Panc1 (cell line): ENCODE measurements at regions of chr17 and their contacts with region 1.

Region 1: GRCh38 chr17:75109407-75110233 is at the start of gene ARMC7:
- DNase-seq: no peak
- ATAC-seq: peak; percentile 78
- H3K4me3 ChIP-seq: peak within 1 kb of the TSS; percentile 83 to 88
- H3K27ac ChIP-seq: peak within 1 kb of the TSS; percentile 88
- H3K4me1 ChIP-seq: peaks cover 42% of the 10 kb centered on the region
- H3K27me3 ChIP-seq: no peaks in the 10 kb centered on the region
- CTCF ChIP-seq: no peak
- total RNA-seq, gene ARMC7: 48.7 TPM

Region 2: GRCh38 chr17:75059369-75060345 is 50.0 kb before region 1 on chr17:
- CTCF ChIA-PET with region 1: interaction called, 11 read pairs
- POLR2A ChIA-PET with region 1: no interaction called
- in situ Hi-C with region 1: no loop called
- intact Hi-C with region 1: no loop called
- DNase-seq: no peak
- ATAC-seq: peak; percentile 78
- H3K4me3 ChIP-seq: no peak overlapping the region
- H3K27ac ChIP-seq: no peak overlapping the region
- H3K4me1 ChIP-seq: no peaks in the 10 kb centered on the region
- H3K27me3 ChIP-seq: no peaks in the 10 kb centered on the region
- CTCF ChIP-seq: no peak

Region 3: DNA sequence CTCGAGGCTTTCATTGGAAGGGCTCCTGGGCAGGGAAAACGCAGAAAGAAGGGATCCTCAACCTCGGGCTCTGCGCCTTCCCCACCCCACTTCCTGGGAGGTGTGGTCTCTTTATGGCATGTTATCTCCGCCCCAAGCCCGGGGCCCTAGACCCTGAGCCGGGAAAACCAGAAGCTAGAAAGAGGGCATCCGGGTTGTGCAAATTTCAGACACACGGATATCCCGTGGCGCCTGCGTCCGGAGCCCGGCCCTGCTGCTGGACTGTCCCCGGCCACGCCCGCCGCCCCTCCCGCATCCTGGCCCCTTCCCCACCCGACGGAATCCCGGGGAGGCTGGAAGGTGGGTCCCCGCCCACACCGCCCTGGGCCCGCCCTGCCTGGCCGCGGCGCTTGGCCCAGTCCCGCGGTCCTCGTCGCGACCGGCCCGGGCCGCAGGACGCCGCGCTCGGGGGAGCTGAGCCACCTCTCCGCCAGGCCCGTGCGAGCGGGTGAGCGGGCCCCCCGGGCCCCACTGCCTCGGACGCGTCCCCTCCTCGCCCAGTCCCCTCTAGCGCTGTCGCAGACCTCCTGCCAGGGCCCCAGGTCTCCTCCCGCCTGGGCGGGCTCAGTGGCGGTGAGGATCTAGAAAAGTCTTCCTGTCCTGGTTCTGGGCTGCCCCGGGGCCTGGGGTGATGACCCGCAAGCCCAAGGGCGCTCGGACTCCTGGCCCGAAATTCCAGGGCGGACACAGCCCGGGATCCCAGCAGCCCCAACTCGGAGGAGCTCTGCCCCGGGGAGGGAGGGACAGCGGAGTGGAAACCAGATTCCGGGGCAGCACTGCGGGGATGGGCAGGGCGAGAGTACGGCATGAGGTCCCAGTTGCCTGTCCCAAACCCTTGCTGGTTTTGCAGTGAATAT is 21.8 kb before region 1 on chr17 and contains the start of gene SLC16A5:
- CTCF ChIA-PET with region 1: interaction called, 11 read pairs
- POLR2A ChIA-PET with region 1: interaction called, 5 read pairs
- in situ Hi-C with region 1: no loop called
- intact Hi-C with region 1: no loop called
- DNase-seq: no peak
- ATAC-seq: peak; percentile 85
- H3K4me3 ChIP-seq: peak within 1 kb of the TSS; percentile 56 to 76
- H3K27ac ChIP-seq: peak within 1 kb of the TSS; percentile 93
- H3K4me1 ChIP-seq: peaks cover 57% of the 10 kb centered on the region
- H3K27me3 ChIP-seq: no peaks in the 10 kb centered on the region
- CTCF ChIP-seq: no peak
- total RNA-seq, gene SLC16A5: 46.6 TPM

Region 4: GRCh38 chr17:75173526-75173925 is 63.9 kb after region 1 on chr17:
- CTCF ChIA-PET with region 1: interaction called, 21 read pairs
- POLR2A ChIA-PET with region 1: no interaction called
- in situ Hi-C with region 1: no loop called
- intact Hi-C with region 1: no loop called
- DNase-seq: no peak
- ATAC-seq: no peak
- H3K4me3 ChIP-seq: no peak overlapping the region
- H3K27ac ChIP-seq: no peak overlapping the region
- H3K4me1 ChIP-seq: no peaks in the 10 kb centered on the region
- H3K27me3 ChIP-seq: no peaks in the 10 kb centered on the region
- CTCF ChIP-seq: no peak

Region 5: DNA sequence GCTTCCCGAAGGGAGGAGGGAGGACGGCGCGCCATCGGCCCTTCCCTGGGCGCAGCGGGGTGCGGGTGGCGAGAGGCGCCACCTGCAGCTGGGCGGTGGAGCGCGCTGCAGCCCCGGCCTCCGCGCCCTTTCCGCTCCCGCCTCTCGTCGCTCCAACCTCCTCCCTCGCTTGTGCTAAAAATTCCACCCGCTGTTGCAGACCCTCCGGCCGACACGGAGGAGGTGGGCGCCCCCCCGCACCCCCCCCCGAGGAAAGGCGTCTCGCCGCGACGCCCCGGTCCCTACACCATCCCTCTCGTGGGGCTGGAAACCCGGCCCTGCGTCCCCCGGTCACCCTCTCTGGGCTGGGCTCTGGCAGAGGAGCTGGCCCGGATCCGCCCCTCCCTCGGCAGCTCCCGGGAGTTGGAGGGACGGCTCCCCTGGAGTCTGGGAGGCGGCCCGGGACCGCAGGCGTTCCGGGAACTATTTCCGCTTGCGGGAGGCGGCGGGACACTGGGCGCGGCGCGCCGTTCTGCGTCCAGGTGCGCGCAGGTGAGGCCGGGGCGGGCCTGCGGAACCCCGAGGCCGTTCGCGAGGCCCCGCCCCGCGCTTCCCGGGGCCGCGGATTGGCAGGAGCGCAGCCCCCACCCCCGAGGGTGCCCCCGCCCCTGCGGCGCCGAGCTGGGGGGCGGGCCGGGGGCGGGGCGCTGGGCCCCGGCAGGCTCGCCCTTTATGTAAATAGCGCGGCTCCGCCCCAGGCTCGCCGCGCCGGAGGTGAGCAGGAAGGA is 415.5 kb after region 1 on chr17 and contains the start of gene LLGL2:
- CTCF ChIA-PET with region 1: interaction called, 10 read pairs
- POLR2A ChIA-PET with region 1: no interaction called
- in situ Hi-C with region 1: no loop called
- intact Hi-C with region 1: no loop called
- DNase-seq: no peak
- ATAC-seq: peak; percentile 88
- H3K4me3 ChIP-seq: peak within 1 kb of the TSS; percentile 68 to 75
- H3K27ac ChIP-seq: peak within 1 kb of the TSS; percentile 81
- H3K4me1 ChIP-seq: peaks cover 13% of the 10 kb centered on the region
- H3K27me3 ChIP-seq: no peaks in the 10 kb centered on the region
- CTCF ChIP-seq: no peak; the same call in 1 of the 2 replicates
- total RNA-seq, gene LLGL2: 201 TPM